ENCODE measurements at regions of chrX and their contacts with region 1.

Region 1: DNA sequence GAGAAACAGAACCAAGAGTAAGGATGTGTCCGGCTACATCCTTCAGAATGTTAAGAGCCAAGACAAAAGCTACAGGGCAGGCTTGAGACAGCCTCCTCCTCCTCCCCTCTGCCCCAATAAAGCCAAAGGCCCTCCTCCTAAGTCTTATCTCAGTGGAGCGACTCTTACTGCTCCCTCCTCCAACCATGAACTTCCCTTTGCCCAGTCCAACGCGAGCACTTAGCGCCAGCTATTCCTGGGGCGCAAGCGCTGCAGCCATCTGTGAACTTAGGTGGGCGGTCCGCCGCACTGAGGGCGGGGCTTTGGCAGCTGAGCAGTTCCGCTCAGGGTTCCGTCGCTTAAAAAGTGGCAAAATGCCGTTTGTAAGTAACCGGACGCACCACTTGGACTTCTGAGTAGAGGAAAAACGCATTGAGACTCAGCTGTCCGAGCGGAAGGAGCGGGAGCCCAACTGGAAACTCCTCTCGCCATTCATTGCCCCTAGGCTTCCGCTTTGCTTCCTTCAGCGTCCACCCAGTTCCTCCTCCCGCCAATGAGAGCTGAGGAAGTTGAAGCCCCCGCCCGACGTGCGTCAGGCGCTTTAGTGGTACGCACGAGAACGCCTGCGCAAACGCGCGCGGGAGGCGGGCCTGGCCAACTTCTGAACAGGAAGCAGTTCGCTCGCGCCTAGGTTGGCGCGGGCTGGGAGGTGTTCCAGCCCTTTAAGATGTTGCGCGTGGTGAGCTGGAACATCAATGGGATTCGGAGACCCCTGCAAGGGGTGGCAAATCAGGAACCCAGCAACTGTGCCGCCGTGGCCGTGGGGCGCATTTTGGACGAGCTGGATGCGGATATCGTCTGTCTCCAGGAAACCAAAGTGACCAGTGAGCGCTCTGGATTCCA is at the start of gene APEX2:
- DNase-seq: peak; percentile 91
- ATAC-seq: peak; percentile 95
- H3K4me3 Mint-ChIP-seq: peak within 1 kb of the TSS; percentile 88
- H3K27ac Mint-ChIP-seq: peak within 1 kb of the TSS; percentile 93
- H3K4me1 Mint-ChIP-seq: peaks cover 30% of the 10 kb centered on the region
- H3K27me3 Mint-ChIP-seq: no peaks in the 10 kb centered on the region
- total RNA-seq, gene APEX2: 26.9 to 28.0 TPM

Region 2: GRCh38 chrX:54639346-54640102 is 360.4 kb before region 1 on chrX:
- CTCF ChIA-PET with region 1: no interaction called
- POLR2A ChIA-PET with region 1: interaction called, 10 read pairs
- DNase-seq: peak; percentile 96
- ATAC-seq: peak; percentile 97
- H3K4me3 Mint-ChIP-seq: peak overlapping the region; percentile 92
- H3K27ac Mint-ChIP-seq: peak overlapping the region; percentile 99
- H3K4me1 Mint-ChIP-seq: peaks cover 12% of the 10 kb centered on the region
- H3K27me3 Mint-ChIP-seq: no peaks in the 10 kb centered on the region

Region 3: DNA sequence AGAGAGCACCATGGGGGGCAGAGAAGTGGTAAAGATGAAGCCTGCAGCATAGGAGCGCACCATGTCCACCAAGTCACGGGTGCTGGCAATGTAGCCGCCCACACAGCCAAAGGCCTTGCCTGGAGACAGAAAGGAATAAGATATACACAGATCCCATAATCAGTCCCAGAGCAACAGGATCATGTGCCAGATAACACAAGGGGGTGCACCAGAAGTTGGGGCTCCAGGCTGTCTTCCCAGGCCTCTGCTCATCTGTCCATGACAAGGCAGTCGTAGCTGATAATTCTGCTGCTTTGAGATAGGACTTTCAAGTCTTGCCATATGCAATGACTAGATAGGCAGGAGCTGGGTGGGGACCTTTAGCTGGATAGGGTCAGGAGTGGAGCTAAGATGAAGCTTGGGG is 14.9 kb after region 1 on chrX:
- CTCF ChIA-PET with region 1: interaction called, 16 read pairs
- POLR2A ChIA-PET with region 1: interaction called, 10 read pairs
- DNase-seq: no peak
- ATAC-seq: no peak
- H3K4me3 Mint-ChIP-seq: no peak overlapping the region
- H3K27ac Mint-ChIP-seq: no peak overlapping the region
- H3K4me1 Mint-ChIP-seq: no peaks in the 10 kb centered on the region
- H3K27me3 Mint-ChIP-seq: no peaks in the 10 kb centered on the region

Region 4: GRCh38 chrX:55057675-55058249 is 57.8 kb after region 1 on chrX:
- CTCF ChIA-PET with region 1: interaction called, 10 read pairs
- POLR2A ChIA-PET with region 1: interaction called, 4 read pairs
- DNase-seq: peak; percentile 46
- ATAC-seq: peak; percentile 70
- H3K4me3 Mint-ChIP-seq: peak overlapping the region; percentile 36
- H3K27ac Mint-ChIP-seq: no peak overlapping the region
- H3K4me1 Mint-ChIP-seq: peaks cover 9% of the 10 kb centered on the region
- H3K27me3 Mint-ChIP-seq: peaks cover 2% of the 10 kb centered on the region

Region 5: DNA sequence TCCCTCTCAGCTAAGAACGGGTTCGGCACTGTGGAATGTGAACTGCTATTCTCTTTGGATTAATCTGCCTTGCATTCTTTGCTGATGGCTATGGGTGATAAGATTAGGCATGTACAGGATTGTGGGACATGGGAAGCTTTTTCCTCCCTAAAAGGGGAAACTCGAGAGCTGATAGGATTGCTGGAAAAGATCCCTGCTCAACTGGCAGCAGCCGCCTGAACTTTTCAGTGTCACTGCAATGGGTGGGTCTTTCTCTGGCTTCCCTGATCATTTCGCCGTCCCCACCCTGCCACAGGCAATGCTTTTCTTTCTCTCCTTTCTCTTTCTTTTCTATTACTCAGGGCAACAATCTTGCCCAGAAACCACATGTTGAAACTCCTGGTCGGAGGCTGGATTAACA is 109.3 kb after region 1 on chrX:
- CTCF ChIA-PET with region 1: no interaction called
- POLR2A ChIA-PET with region 1: no interaction called
- DNase-seq: no peak
- ATAC-seq: no peak
- H3K4me3 Mint-ChIP-seq: no peak overlapping the region
- H3K27ac Mint-ChIP-seq: no peak overlapping the region
- H3K4me1 Mint-ChIP-seq: no peaks in the 10 kb centered on the region
- H3K27me3 Mint-ChIP-seq: no peaks in the 10 kb centered on the region

Measured in activated CD8-positive, alpha-beta T cell treated with anti-CD3 and anti-CD28 coated beads, Interleukin-2, amount 10 ng/mL, durations not matched to agents 7 days and 5 days (primary cell).